Ascending aorta (tissue), 2 donors: ENCODE measurements at regions of chr22 and their contacts with region 1.

Region 1: GRCh38 chr22:30591588-30592359 is at the start of gene PES1:
- DNase-seq: peak; percentile 81 to 98
- H3K4me3 ChIP-seq: peak within 1 kb of the TSS; percentile 59 to 85
- H3K27ac ChIP-seq: peak within 1 kb of the TSS; percentile 73 to 81
- H3K4me1 ChIP-seq: peaks cover 6 to 15% of the 10 kb centered on the region in 2 donors
- H3K27me3 ChIP-seq: no peaks in the 10 kb centered on the region
- CTCF ChIP-seq: no peak
- total RNA-seq, gene PES1: 24.7 TPM

Region 2: GRCh38 chr22:30606455-30607299 is 14.9 kb after region 1 on chr22 and contains the start of gene TCN2:
- intact Hi-C with region 1: loop called (anchors 1 kb)
- DNase-seq: peak; percentile 24 to 83
- H3K4me3 ChIP-seq: peak within 1 kb of the TSS; percentile 69 to 76
- H3K27ac ChIP-seq: peak within 1 kb of the TSS; percentile 60 to 63
- H3K4me1 ChIP-seq: peaks cover 5 to 13% of the 10 kb centered on the region in 2 donors
- H3K27me3 ChIP-seq: no peaks in the 10 kb centered on the region
- CTCF ChIP-seq: no peak
- total RNA-seq, gene TCN2: 56.8 TPM

Region 3: DNA sequence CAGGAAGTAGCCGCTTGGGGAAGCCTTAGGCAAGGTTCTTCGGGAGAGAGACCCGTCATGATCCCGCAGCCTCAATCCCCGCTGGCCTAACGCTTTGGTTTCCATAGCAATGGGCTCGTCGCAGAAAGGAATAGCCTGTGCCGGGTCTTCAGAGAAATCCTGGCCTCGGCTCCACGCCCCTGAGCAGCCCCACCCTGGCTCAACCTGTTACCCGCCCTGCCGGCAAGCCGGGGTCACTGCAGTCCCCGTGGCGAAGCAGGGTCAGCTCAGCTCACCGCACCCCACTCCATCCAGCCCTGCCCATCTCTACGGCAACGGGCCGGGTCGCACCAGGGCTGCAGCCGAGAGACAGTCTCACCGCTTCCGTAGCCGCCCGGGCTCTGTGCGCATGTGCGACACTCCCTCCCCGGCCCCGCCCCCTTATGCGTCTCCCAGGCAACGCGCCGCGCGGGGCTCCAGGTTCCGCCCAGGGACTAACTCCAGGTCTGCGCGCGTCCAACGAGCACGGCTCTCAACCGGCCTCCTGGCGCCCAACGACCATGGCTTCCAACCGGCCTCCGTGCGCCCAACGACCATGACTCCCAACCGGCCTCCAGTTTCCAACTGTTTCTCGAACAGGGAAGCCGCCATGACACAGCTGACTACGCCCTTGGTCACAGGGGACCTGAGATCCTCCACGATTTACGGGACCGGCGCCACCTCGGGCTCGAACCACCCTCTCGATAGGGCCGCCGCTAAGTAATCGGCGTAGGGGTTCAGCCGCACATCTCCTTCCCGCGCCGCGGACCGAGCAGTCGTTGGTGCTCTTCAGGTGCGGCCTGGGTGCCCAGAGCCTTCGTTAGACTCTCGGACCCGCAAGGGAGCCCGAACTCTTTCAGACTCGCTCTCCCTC is 76.0 kb after region 1 on chr22 and contains the start of gene DUSP18:
- intact Hi-C with region 1: loop called (anchors 5 kb)
- DNase-seq: peak; percentile 73 to 96
- H3K4me3 ChIP-seq: peak within 1 kb of the TSS; percentile 64 to 80
- H3K27ac ChIP-seq: peak within 1 kb of the TSS in 1 of 2 donors; percentile 1
- H3K4me1 ChIP-seq: peaks cover 4% of the 10 kb centered on the region in 2 donors
- H3K27me3 ChIP-seq: no peaks in the 10 kb centered on the region
- CTCF ChIP-seq: peak in 2 of 3 experiments; percentile 28 to 40
- total RNA-seq, gene DUSP18: 0.21 TPM